HepG2 (cell line): ENCODE measurements at regions of chrX and their contacts with region 1.

Region 1: GRCh38 chrX:145190801-145191389 is 56.4 kb upstream of the SPANXN1 start:
- DNase-seq: peak; percentile 0
- ATAC-seq: no peak
- H3K4me3 ChIP-seq: no peak overlapping the region
- H3K27ac ChIP-seq: no peak overlapping the region
- H3K4me1 ChIP-seq: no peaks in the 10 kb centered on the region
- H3K27me3 ChIP-seq: no peaks in the 10 kb centered on the region
- CTCF ChIP-seq: no peak
- EP300 ChIP-seq: no peak
- POLR2A ChIP-seq: no peak
- RAD21 ChIP-seq: no peak

Region 2: GRCh38 chrX:143669395-143669794 is 1521.5 kb before region 1 on chrX:
- CTCF ChIA-PET with region 1: interaction called, 4 read pairs
- POLR2A ChIA-PET with region 1: no interaction called
- in situ Hi-C with region 1: no loop called
- intact Hi-C with region 1: loop called (anchors 5 kb)
- DNase-seq: no peak
- ATAC-seq: no peak
- H3K4me3 ChIP-seq: no peak overlapping the region
- H3K27ac ChIP-seq: no peak overlapping the region
- H3K4me1 ChIP-seq: no peaks in the 10 kb centered on the region
- H3K27me3 ChIP-seq: no peaks in the 10 kb centered on the region
- CTCF ChIP-seq: no peak
- EP300 ChIP-seq: no peak
- POLR2A ChIP-seq: no peak
- RAD21 ChIP-seq: no peak